AG04449 (cell line): ENCODE measurements at regions of chr16 and their contacts with region 1.

Region 1: GRCh38 chr16:86519649-86520316 is 9.5 kb downstream of the FOXF1 start:
- DNase-seq: no peak
- H3K4me3 ChIP-seq: peak overlapping the region; percentile 37
- CTCF ChIP-seq: peak; percentile 86

Region 2: GRCh38 chr16:85821441-85822135 is 698.2 kb before region 1 on chr16:
- CTCF ChIA-PET with region 1: interaction called, 57 read pairs
- POLR2A ChIA-PET with region 1: no interaction called
- DNase-seq: no peak
- H3K4me3 ChIP-seq: no peak overlapping the region
- CTCF ChIP-seq: peak; percentile 98

Region 3: GRCh38 chr16:86059253-86060171 is 460.3 kb before region 1 on chr16:
- CTCF ChIA-PET with region 1: interaction called, 13 read pairs
- POLR2A ChIA-PET with region 1: no interaction called
- DNase-seq: no peak
- H3K4me3 ChIP-seq: no peak overlapping the region
- CTCF ChIP-seq: no peak

Region 4: DNA sequence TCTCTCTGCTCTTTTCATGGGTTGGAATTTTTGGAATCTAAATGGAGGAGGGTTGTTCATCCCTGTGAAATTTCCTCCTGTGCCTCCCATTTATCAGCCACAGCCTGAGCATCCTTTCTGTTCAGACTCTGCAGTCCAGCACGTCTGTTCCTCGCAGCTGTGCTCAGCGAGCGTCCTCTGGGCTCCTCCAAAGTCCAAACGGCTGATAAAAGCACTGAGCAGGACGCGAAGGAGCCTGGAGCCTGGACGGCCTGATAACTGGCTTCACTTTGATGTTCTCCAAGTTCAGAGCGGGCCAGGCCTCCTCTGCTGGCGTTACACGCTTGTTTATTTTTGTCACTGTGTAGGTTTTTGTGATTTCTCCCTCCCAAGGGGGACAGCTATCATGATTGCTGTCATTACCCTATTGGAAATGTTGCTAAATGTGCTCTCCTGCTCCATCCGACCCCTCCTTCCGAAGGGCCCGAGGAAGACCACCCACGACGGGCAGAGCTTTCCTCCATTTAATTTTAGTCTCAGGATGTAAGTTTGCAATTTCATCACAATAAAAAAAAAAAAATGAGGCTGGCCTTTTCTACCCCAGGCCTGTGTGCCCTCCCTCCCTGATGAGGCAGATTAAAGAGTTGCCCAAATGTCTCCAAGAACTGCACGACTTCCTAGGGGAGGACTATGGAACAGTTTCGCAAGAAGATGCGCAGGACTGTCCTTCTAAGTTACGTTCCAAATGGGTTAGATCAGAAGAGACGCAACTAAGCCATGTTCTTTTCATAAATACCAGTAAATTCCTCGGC is 299.9 kb before region 1 on chr16:
- CTCF ChIA-PET with region 1: interaction called, 11 read pairs
- POLR2A ChIA-PET with region 1: no interaction called
- DNase-seq: no peak
- H3K4me3 ChIP-seq: no peak overlapping the region
- CTCF ChIP-seq: no peak

Region 5: GRCh38 chr16:86353185-86353584 is 166.6 kb before region 1 on chr16:
- CTCF ChIA-PET with region 1: interaction called, 14 read pairs
- POLR2A ChIA-PET with region 1: no interaction called
- DNase-seq: no peak
- H3K4me3 ChIP-seq: no peak overlapping the region
- CTCF ChIP-seq: no peak

Region 6: DNA sequence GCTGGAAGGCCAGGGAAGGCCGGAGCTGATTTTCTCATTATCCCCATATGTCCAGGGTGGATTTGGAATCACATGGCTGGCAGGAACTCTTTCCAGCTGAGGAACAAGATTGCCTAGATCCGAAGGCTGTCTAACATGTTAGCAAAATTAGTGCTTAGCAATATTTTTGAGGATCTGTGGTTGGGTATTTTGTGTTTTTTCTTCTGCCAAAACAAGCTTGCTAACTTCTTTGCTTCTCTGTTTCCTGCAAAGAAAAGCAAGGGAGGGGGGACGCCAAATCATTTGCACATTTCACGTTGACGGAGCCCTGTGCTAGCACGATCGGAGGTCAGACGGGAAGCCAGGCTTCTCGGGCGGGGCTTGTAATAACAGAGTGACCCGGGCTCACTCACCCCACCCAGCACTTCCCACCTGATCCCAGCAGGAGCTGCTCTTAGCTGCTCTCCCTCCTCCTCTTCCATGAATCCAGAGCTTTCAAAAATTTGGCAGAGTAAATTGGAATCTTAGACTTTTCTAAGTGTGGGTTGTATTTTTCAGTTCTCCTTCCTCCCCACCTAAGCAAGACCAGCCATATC is 42.7 kb before region 1 on chr16:
- CTCF ChIA-PET with region 1: interaction called, 11 read pairs
- POLR2A ChIA-PET with region 1: no interaction called
- DNase-seq: no peak
- H3K4me3 ChIP-seq: no peak overlapping the region
- CTCF ChIP-seq: no peak

Region 7: GRCh38 chr16:86634292-86634691 is 114.5 kb after region 1 on chr16:
- CTCF ChIA-PET with region 1: no interaction called
- POLR2A ChIA-PET with region 1: no interaction called
- DNase-seq: no peak
- H3K4me3 ChIP-seq: no peak overlapping the region
- CTCF ChIP-seq: no peak

Region 8: GRCh38 chr16:86680162-86680561 is 160.4 kb after region 1 on chr16:
- CTCF ChIA-PET with region 1: no interaction called
- POLR2A ChIA-PET with region 1: no interaction called
- DNase-seq: peak; percentile 86
- H3K4me3 ChIP-seq: no peak overlapping the region
- CTCF ChIP-seq: no peak